Psoas muscle (tissue), 8 donors: ENCODE measurements at regions of chr3 and their contacts with region 1.

Region 1: DNA sequence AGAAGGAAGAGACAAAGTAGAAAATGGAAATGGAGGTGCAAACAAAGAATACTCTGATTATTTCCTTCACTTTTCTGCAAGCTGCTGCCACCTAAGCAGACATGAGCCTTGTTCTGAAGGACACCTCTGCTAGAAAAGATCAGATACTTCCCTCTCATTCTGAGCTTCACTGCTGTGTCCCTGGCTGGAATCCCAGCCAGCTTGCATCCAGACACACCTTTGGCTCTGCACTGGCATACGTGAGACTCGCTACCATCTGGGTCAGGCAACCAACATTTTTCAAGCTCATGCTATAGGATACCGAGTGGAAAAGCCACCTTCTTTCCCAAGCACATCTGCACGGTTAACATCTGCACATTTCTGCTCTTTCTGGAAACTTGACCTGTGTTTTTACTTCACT is 166.7 kb upstream of the SUCLG2 start:
- DNase-seq: no peak
- ATAC-seq: no peak
- H3K4me3 ChIP-seq: no peak overlapping the region
- H3K27ac ChIP-seq: no peak overlapping the region
- H3K4me1 ChIP-seq: no peaks in the 10 kb centered on the region
- H3K27me3 ChIP-seq: no peaks in the 10 kb centered on the region
- CTCF ChIP-seq: no peak

Region 2: GRCh38 chr3:67901681-67902080 is 80.5 kb after region 1 on chr3:
- intact Hi-C with region 1: no loop called
- DNase-seq: no peak
- ATAC-seq: no peak
- H3K4me3 ChIP-seq: no peak overlapping the region
- H3K27ac ChIP-seq: no peak overlapping the region
- H3K4me1 ChIP-seq: no peaks in the 10 kb centered on the region
- H3K27me3 ChIP-seq: no peaks in the 10 kb centered on the region
- CTCF ChIP-seq: no peak

Region 3: GRCh38 chr3:68876112-68876713 is 1055.1 kb after region 1 on chr3:
- intact Hi-C with region 1: loop called in 1 of 2 experiments (anchors 10 kb)
- DNase-seq: no peak
- ATAC-seq: peak; percentile 47 to 80 (median 72)
- H3K4me3 ChIP-seq: no peak overlapping the region
- H3K27ac ChIP-seq: no peak overlapping the region
- H3K4me1 ChIP-seq: no peaks in the 10 kb centered on the region
- H3K27me3 ChIP-seq: no peaks in the 10 kb centered on the region
- CTCF ChIP-seq: peak; percentile 89